BJ (cell line): ENCODE measurements at regions of chr19 and their contacts with region 1.

Region 1: DNA sequence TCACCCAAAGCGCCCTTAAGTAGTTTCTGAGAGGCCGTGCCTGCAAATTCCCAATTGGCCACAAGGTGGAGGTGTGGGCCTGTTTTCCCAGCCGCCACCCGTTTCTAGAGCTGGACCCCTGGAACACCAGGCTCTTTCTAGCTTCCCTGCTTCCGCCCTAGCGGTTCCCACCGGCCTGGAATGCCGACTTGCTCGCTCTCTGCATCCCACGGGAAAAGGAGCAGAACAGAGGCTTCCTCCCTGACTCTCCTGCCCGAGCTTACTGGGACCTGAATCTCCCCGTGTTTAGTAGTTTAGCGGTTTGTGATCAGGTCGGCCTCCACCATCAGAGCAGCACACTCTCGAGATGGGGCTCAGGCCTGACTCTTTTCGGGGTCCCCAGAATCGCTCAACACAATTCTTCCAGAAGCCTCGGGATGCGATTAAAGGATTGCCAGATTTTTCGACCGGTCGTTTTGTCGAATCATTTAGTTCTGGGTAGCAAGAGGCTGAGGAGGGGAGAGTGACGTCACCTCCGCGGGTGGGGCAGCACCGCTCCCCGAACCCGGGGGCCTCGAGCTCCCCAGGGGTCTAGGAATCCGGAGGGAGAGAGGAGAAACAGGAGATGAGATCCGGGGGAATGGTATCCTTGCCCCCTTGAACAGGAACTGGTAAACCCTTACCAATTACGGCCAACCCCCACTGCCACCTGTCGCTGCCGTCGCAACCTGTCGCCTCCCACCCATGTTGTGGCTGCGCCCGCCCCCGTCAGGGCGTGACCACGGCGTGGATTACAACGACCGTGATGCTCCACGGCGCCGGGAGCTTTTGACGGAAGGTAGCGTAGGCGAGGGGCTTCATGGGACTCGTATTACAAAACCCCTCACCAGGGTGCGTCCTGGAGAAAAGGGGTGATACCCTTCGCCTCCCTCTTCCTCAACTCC is 8.0 kb downstream of the NAPSA start:
- DNase-seq: no peak
- H3K4me3 ChIP-seq: peak overlapping the region; percentile 42
- H3K27me3 ChIP-seq: no peaks in the 10 kb centered on the region
- CTCF ChIP-seq: peak; percentile 86

Region 2: GRCh38 chr19:50341091-50341564 is 16.3 kb before region 1 on chr19:
- CTCF ChIA-PET with region 1: interaction called, 12 read pairs
- POLR2A ChIA-PET with region 1: no interaction called
- DNase-seq: no peak
- H3K4me3 ChIP-seq: no peak overlapping the region
- H3K27me3 ChIP-seq: no peaks in the 10 kb centered on the region
- CTCF ChIP-seq: no peak

Region 3: DNA sequence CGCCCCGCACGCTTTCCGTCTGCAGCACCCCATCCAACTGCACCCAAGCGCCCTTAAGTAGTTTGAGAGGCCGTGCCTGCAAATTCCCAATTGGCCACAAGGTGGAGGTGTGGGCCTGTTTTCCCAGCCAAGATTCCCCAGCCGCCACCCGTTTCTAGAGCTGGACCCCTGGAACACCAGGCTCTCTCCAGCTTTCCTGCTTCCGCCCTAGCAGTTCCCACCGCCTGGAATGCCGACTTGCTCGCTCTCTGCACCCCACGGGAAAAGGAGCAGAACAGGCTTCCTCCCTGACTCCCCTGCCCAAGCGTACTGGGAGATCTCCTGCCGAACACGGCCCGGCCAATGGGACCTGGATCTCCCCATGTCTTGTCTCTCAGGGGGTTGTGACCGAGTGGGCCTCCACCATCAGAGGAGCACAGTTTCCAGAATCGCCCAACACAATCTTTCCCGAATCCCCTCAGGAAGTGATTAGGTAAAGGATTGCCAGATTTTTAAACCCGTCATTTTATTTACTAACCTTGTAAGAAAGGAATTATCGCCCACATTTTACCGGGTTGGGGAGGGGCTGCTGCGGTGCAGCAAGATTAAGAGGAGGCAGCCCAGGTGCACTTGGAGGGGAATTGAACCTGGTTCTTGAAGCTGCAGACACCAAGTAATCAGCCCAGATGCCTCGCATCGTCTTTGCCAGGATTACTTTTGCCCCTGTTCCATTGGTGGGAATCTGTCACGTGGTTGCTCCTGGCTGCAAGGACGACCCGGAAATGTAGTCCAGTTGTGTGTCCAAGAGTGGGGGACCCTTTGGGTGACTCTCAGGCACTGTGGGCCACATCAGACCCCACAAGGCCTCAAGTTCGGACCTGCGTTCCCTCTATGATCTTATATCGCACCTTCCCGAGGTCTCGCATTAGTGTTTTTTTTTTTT is 11.5 kb after region 1 on chr19:
- CTCF ChIA-PET with region 1: interaction called, 25 read pairs
- POLR2A ChIA-PET with region 1: no interaction called
- DNase-seq: peak; percentile 44
- H3K4me3 ChIP-seq: peak overlapping the region; percentile 86
- H3K27me3 ChIP-seq: no peaks in the 10 kb centered on the region
- CTCF ChIP-seq: peak; percentile 86

Region 4: GRCh38 chr19:50406174-50406819 is 48.9 kb after region 1 on chr19:
- CTCF ChIA-PET with region 1: no interaction called
- POLR2A ChIA-PET with region 1: no interaction called
- DNase-seq: no peak
- H3K4me3 ChIP-seq: no peak overlapping the region
- H3K27me3 ChIP-seq: no peaks in the 10 kb centered on the region
- CTCF ChIP-seq: no peak

Region 5: DNA sequence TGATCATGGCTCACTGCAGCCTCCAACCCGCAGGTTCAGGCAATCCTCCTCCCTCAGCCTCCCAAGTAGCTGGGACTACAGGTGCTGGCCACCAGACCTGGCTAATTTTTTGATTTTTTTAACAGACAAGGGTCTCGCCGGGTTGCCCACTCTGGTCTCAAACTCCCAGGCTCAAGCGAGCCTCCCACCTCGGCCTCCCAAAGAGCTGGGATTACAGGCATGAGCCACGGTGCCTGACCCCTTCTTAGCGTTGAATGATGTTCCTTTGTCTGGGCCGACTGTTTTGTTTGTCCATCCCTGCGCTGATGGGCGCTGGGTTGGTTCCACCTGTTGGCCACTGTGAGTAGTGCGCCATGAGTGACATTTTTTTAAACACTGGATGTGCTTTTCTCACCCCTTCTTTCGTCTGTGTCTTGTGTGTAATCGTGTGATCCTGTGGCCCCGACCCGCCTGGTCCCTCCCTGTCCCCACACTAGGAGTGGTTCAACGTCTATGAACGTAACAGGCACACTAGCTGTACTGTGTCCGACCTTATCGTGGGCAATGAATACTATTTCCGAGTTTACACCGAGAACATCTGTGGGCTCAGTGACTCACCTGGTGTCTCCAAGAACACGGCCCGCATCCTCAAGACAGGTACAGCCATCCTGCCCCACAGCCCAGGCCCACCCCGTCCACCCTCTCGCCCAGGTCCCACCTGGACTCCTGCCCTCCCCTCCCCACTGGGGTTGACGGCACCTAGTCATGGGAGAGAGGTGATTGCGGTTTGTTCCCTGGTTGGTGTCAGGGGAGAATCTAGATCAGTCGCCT is 103.8 kb after region 1 on chr19:
- CTCF ChIA-PET with region 1: interaction called, 79 read pairs
- POLR2A ChIA-PET with region 1: no interaction called
- DNase-seq: peak; percentile 6
- H3K4me3 ChIP-seq: no peak overlapping the region
- H3K27me3 ChIP-seq: peaks cover 2% of the 10 kb centered on the region; the same call in 1 of the 2 replicates
- CTCF ChIP-seq: peak; percentile 86